ENCODE measurements at regions of chr9 and their contacts with region 1.

Region 1: DNA sequence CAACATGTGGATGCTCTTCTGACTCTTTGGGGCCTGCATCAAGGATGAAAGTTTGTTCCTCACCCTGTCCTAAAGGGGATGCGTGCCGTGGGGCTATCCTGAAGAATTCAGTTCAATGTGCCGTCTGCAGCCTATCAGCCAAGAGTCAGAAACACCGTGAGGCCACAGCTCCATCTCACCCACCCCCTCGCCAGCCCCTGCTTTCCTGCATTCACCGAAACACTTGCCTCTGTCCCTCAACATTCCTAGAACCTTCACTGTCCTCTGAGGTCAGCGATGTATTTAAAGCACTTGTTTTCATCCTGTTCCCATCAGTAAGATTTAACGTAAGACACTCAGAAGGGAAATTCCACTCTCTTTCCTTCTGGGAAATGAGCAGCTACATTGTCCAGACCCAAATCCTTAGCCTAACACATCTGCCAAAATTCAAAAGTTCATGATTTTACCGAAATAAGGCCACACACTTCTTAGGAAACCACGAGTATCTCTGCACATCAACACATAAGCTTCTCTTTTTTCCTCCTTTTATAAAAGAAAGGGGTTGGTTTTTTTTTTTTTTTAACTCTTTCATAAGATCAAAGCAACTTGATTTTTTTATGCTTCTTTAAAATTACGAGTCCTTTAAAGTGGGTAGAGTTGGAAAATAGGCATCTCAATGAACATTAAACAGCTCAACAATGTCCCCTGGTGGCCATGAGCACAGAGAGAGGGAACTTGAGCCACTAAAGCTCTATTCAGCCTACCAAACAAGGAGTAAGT is 100.7 kb downstream of the SUSD1 start:
- DNase-seq: peak in 1 of 2 experiments; percentile 77
- ATAC-seq: peak; percentile 75 to 90; a peak in 5 of 6 replicates
- H3K4me3 ChIP-seq: no peak overlapping the region
- H3K27ac ChIP-seq: peak overlapping the region; percentile 65 to 86
- H3K4me1 ChIP-seq: peaks cover 31% of the 10 kb centered on the region
- CTCF ChIP-seq: peak; percentile 98
- EP300 ChIP-seq: peak in 1 of 2 experiments; percentile 71; a peak in 3 of 5 replicates
- POLR2A ChIP-seq: no peak
- RAD21 ChIP-seq: peak; percentile 99

Region 2: DNA sequence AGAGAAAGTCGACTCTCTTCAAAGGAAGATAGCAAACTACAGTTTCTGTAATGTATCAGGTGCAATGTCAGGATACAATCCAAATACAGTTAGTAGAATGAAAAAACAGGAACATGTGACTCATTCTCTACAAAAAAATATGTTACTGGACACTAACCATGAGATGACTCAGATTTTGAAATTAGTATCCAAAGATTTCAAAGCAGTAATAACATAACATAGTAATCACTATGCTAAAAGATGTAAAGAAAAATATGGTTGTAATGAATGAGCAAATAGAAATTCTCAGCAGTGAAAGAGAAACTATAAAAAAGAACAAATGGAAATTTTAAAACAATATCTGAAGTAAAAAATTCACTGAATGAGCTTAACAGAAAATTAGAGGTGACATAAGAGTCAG is 322.0 kb before region 1 on chr9:
- CTCF ChIA-PET with region 1: interaction called, 16 read pairs
- POLR2A ChIA-PET with region 1: no interaction called
- DNase-seq: no peak
- ATAC-seq: no peak
- H3K4me3 ChIP-seq: no peak overlapping the region
- H3K27ac ChIP-seq: no peak overlapping the region
- H3K4me1 ChIP-seq: no peaks in the 10 kb centered on the region
- CTCF ChIP-seq: no peak
- EP300 ChIP-seq: no peak
- POLR2A ChIP-seq: no peak
- RAD21 ChIP-seq: no peak

Region 3: DNA sequence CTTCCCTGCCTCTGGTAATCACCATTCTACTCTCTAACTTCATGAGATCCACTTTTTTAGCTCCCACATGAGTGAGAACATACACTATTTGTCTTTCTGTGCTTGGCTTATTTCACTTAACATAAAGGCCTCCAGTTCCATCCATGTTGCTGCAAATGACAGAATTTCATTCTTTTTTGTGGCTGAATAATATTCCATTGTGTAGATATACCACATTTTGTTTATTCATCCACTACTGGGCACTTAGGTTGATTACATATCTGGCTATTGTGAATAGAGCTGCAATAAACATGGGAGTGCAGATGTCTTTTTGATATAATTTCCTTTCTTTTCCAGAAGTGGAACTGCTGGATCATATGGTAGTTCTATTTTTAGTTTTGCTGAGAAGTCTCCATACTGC is 308.4 kb before region 1 on chr9:
- CTCF ChIA-PET with region 1: interaction called, 131 read pairs
- POLR2A ChIA-PET with region 1: interaction called, 4 read pairs
- DNase-seq: no peak
- ATAC-seq: no peak
- H3K4me3 ChIP-seq: no peak overlapping the region
- H3K27ac ChIP-seq: no peak overlapping the region
- H3K4me1 ChIP-seq: no peaks in the 10 kb centered on the region
- CTCF ChIP-seq: no peak
- EP300 ChIP-seq: no peak
- POLR2A ChIP-seq: no peak
- RAD21 ChIP-seq: no peak

Region 4: DNA sequence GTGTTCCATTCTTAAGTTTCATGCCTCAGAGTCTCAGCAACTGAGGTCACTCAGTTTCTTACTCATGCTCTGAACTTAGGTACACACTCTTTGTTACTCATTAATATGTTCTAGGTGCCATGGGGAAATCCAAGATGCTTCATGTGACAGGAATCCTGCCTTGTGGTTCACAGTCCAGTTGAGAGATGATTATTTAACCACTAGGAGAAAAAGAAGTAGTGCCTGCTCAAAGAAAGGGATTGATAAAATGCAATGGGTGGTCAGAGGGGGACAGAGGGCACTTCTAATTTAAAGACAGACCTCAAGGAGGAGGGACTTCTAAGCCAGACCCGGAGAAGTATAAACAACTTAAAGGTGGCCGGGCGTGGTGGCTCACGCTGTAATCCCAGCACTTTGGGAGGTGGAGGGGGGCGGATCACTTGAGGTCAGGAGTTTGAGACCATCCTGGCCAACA is 108.8 kb before region 1 on chr9:
- CTCF ChIA-PET with region 1: interaction called, 11 read pairs
- POLR2A ChIA-PET with region 1: no interaction called
- DNase-seq: peak; percentile 96 to 97
- ATAC-seq: peak; percentile 94 to 97
- H3K4me3 ChIP-seq: no peak overlapping the region
- H3K27ac ChIP-seq: peak overlapping the region; percentile 77 to 89
- H3K4me1 ChIP-seq: peaks cover 53% of the 10 kb centered on the region
- CTCF ChIP-seq: no peak
- EP300 ChIP-seq: peak; percentile 49 to 78; a peak in 3 of 5 replicates
- POLR2A ChIP-seq: no peak
- RAD21 ChIP-seq: peak; percentile 36 to 52; a peak in 2 of 5 replicates

Region 5: GRCh38 chr9:112037281-112038016 is 37.0 kb before region 1 on chr9:
- CTCF ChIA-PET with region 1: interaction called, 19 read pairs
- POLR2A ChIA-PET with region 1: interaction called, 4 read pairs
- DNase-seq: no peak
- ATAC-seq: no peak
- H3K4me3 ChIP-seq: no peak overlapping the region
- H3K27ac ChIP-seq: peak overlapping the region; percentile 2 to 59; a peak in 4 of 6 replicates
- H3K4me1 ChIP-seq: peaks cover 34% of the 10 kb centered on the region
- CTCF ChIP-seq: no peak
- EP300 ChIP-seq: no peak
- POLR2A ChIP-seq: no peak
- RAD21 ChIP-seq: no peak

Region 6: DNA sequence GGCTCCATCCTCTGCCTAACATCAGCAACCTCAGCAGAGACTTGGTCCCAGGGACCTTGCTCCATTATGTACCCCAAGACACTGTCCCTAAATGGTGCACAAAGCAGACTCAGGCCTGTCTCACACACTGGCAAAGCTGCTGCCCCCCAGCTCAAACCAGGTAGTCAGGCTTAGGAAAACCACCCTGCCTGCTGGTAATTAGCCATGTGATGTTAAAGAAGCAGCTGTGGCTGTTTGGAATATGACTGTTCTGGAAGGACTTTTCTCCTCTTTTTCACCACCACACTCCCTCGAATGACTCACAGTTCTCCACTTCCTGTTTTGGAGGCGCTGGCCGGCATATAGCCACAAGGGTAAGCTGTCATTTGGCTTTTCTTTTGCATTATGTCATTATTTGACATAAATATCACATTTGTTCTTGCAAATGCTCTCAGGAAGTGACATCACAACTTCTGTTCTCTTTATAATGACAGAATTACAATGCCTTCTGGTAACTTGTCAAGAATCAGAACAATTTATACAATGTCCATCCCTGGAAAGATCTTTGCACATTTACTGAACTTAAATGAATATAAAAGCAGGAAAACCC is 13.2 kb before region 1 on chr9:
- CTCF ChIA-PET with region 1: interaction called, 26 read pairs
- POLR2A ChIA-PET with region 1: interaction called, 4 read pairs
- DNase-seq: peak; percentile 80 to 81
- ATAC-seq: peak; percentile 69 to 74
- H3K4me3 ChIP-seq: no peak overlapping the region
- H3K27ac ChIP-seq: peak overlapping the region; percentile 74 to 83
- H3K4me1 ChIP-seq: peaks cover 50% of the 10 kb centered on the region
- CTCF ChIP-seq: no peak
- EP300 ChIP-seq: peak in 1 of 2 experiments; percentile 38; a peak in 1 of 5 replicates
- POLR2A ChIP-seq: no peak
- RAD21 ChIP-seq: no peak

Region 7: GRCh38 chr9:112249277-112249676 is 174.8 kb after region 1 on chr9:
- CTCF ChIA-PET with region 1: no interaction called
- POLR2A ChIA-PET with region 1: no interaction called
- DNase-seq: peak in 1 of 2 experiments; percentile 6
- ATAC-seq: peak in 1 of 2 experiments; percentile 29; a peak in 2 of 6 replicates
- H3K4me3 ChIP-seq: no peak overlapping the region
- H3K27ac ChIP-seq: peak overlapping the region; percentile 9 to 44; a peak in 4 of 6 replicates
- H3K4me1 ChIP-seq: peaks cover 25% of the 10 kb centered on the region
- CTCF ChIP-seq: no peak
- EP300 ChIP-seq: no peak
- POLR2A ChIP-seq: no peak
- RAD21 ChIP-seq: no peak

Region 8: GRCh38 chr9:112271466-112272092 is 197.2 kb after region 1 on chr9:
- CTCF ChIA-PET with region 1: no interaction called
- POLR2A ChIA-PET with region 1: no interaction called
- DNase-seq: peak; percentile 31 to 46
- ATAC-seq: peak in 1 of 2 experiments; percentile 76; a peak in 3 of 6 replicates
- H3K4me3 ChIP-seq: no peak overlapping the region
- H3K27ac ChIP-seq: peak overlapping the region; percentile 42 to 70; a peak in 5 of 6 replicates
- H3K4me1 ChIP-seq: peaks cover 28% of the 10 kb centered on the region
- CTCF ChIP-seq: no peak
- EP300 ChIP-seq: no peak
- POLR2A ChIP-seq: no peak
- RAD21 ChIP-seq: no peak

Region 9: DNA sequence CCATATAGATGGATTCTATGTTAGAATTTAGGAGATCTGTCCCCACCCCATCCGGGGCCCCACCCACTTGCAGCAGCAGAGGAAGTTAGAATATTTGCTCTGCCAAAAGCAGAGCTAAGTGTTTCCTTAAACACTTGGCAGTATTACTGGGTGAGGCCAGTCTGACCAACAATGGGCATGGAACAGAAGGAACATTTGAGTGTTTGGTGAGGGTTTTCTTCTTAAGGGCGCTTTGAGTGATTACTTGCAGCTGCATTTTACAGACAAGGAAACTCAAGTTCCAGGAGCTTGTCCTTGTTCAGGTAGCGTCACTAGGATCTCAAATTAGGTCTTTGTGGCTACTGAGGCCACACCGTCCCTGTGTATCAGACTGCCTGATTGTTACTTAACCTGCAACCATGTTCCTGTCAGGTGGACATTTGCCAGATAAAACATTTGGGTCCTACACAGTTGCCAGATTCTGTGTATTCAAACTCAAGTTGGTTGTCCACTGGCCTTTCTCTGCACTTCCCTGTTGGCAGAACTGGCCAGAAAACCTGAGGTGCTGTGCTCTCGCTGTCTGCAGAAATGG is 756.9 kb after region 1 on chr9:
- CTCF ChIA-PET with region 1: no interaction called
- POLR2A ChIA-PET with region 1: no interaction called
- DNase-seq: no peak
- ATAC-seq: no peak
- H3K4me3 ChIP-seq: no peak overlapping the region
- H3K27ac ChIP-seq: no peak overlapping the region
- H3K4me1 ChIP-seq: no peaks in the 10 kb centered on the region
- CTCF ChIP-seq: no peak
- EP300 ChIP-seq: no peak
- POLR2A ChIP-seq: no peak
- RAD21 ChIP-seq: no peak